ENCODE measurements at regions of chr6 and their contacts with region 1.

Region 1: DNA sequence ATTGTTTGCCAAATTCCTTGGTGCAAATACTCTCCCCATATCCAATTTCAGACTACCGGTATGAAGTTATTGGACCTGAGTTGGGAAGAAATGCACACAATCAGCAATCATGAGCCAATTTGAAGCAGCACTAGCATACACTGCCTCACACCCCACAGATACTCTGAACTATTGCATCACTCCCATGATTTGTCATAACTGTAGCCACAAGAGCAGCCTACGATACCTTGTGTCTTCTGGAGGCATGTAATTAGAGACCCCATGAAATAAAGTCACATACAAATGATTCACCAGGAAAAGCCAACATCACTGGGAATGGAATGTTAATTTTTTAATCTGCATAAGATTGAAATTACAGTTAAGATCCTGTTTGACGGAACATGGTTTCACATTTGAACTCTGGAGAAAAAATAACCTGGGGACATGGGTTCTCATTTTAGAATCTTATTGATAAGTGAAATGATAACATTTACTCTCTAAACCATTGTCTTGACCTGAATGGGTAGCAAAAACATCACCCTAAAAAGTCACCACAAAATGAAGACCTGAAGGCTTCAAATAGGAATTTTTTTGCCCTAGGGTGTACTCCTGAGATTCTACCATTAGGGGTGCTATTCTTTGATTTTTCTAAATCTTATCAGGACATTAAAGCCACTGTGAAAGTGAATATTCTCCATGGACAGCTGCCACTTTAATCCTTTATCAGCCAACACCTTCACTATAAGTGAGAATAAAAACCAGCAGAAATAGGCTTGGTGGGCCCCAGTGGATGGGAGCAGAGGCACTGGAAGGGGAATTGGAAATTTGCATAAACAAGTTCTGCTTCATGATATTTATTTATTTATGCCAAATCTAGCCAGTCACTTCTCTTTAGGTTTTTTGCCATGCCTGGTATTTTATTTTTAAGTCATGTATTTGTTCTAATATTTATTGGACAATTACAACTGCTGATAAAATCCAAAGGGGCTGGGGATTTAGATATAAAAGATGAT is 34.5 kb upstream of the HBS1L start:
- DNase-seq: peak; percentile 2
- H3K4me3 ChIP-seq: peak overlapping the region; percentile 29; the same call in 1 of the 2 replicates
- CTCF ChIP-seq: peak; percentile 26

Region 2: GRCh38 chr6:135075018-135075417 is 14.1 kb before region 1 on chr6:
- CTCF ChIA-PET with region 1: interaction called, 10 read pairs
- POLR2A ChIA-PET with region 1: no interaction called
- DNase-seq: no peak
- H3K4me3 ChIP-seq: no peak overlapping the region
- CTCF ChIP-seq: no peak

Region 3: DNA sequence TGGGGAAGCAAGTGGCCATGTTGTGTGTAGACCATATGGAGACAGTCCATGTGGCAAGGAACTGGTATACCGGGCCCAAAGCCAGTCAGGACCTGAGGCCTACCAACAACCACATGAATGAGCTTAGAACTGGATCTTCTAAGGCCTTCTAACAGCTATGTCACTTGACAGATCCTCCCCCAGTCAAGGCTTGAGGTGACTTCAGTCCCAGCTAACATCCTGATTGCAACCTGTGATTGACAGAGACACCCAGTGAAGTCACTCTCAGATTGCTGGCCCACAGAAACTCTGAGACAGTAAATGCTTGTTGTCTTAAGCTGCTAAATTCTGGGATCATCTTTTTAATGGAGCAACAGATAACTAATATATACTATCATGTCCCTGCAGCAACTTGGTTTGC is 375.5 kb after region 1 on chr6:
- CTCF ChIA-PET with region 1: no interaction called
- POLR2A ChIA-PET with region 1: no interaction called
- DNase-seq: no peak
- H3K4me3 ChIP-seq: no peak overlapping the region
- CTCF ChIP-seq: no peak

Measured in AG04449 (cell line).